GM13976 (cell line): ENCODE measurements at regions of chr7 and their contacts with region 1.

Region 1: DNA sequence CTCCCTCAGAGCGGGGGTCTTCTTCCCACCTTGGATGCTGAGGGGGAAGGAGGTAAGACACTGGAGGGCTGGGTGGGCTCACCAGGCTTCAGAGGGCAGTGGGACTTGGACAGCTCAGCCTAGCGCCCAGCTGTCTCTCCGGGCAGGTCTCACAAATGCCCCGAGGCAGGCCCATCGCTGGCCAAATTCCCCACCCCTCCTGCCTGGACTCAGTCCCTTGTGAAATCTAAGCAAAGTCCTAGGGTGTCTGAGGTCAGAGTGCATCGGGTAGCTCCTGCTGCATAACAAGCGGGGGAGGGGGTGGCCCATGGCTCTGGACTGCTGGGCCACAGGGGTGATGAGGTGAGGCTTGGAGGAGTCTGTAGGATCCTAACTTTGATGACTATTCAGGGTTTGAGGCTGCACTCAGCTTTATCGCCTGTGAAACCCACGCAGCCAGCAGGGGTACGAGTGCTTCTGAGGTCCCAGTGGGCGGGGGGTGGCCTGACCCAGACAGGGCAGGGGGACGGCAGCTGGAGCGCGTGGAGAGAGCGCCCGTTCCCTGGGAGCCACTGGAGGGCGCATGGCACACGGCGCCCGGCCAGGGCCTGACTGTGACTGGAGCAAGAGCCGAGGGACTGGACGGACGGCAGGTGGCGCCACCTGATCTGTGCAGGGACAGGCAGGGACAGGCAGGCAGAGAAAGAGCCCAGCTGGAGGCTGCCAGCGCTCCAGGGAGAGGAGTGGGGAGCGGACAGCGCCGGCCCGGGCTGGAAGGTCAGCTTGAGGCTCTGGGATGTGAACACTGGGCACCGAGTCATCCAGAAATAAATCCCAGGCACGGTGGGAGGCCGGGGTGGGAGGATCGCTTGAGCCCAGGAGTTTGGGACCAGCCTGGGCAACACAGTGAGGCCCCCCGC is 10.0 kb downstream of the CYP2W1 start:
- DNase-seq: peak; percentile 94
- CTCF ChIP-seq: peak; percentile 100

Region 2: GRCh38 chr7:1086588-1087464 is 93.9 kb after region 1 on chr7:
- in situ Hi-C with region 1: loop called (anchors 10 kb)
- DNase-seq: peak; percentile 94
- CTCF ChIP-seq: peak; percentile 88

Region 3: GRCh38 chr7:1175967-1176851 is 183.3 kb after region 1 on chr7:
- in situ Hi-C with region 1: loop called (anchors 10 kb)
- DNase-seq: peak; percentile 89
- CTCF ChIP-seq: peak; percentile 90